IMR-90 (cell line): ENCODE measurements at regions of chr1 and their contacts with region 1.

Region 1: DNA sequence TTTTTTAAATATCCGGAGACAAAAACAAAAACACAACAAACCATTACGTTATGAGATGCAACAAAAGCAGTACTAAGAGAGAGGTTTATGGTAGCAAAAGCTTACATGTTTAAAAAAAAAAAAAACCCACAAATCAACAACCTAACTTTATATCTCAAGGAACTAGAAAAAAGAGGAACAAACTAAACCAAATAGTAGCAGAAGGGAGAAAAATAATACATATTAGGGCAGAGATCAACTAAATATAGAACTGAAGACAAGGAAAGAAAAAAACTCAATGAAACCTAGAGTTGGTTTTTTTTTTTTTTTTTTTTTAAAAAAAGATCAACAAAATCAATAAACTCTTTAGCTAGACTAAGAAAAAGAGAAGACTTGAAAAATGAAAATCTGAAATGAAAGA is 34.9 kb downstream of the ZNF644 start:
- DNase-seq: no peak
- ATAC-seq: no peak
- H3K4me3 ChIP-seq: no peak overlapping the region
- H3K27ac ChIP-seq: no peak overlapping the region
- H3K4me1 ChIP-seq: no peaks in the 10 kb centered on the region
- H3K27me3 ChIP-seq: no peaks in the 10 kb centered on the region
- CTCF ChIP-seq: no peak
- POLR2A ChIP-seq: no peak
- RAD21 ChIP-seq: no peak

Region 2: DNA sequence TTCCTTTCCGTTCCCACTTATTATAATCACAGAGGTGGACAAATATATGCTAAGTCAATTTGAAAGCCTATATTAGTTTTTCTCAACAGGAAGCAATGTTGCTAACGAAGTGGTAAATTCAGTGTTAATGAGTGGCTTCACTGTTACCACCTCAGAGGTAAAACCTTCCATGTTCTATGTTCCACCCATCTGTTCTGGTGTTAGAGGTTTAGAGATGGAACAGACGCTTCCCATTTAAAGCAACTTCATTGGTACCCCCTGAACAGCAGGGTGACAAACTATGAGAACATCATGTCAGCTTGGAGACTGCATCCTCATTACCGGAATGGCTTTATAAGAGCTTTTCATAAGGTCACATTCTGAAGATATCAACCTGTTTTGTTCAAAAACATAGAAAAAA is 43.0 kb before region 1 on chr1:
- CTCF ChIA-PET with region 1: no interaction called
- POLR2A ChIA-PET with region 1: no interaction called
- dilution Hi-C with region 1: no loop called
- in situ Hi-C with region 1: no loop called
- intact Hi-C with region 1: loop called (anchors 5 kb)
- DNase-seq: no peak
- ATAC-seq: no peak
- H3K4me3 ChIP-seq: no peak overlapping the region
- H3K27ac ChIP-seq: no peak overlapping the region
- H3K4me1 ChIP-seq: peaks cover 2% of the 10 kb centered on the region; the same call in 1 of the 2 replicates
- H3K27me3 ChIP-seq: no peaks in the 10 kb centered on the region
- CTCF ChIP-seq: no peak
- POLR2A ChIP-seq: no peak
- RAD21 ChIP-seq: no peak